Activated CD4-positive, alpha-beta T cell treated with anti-CD3 and anti-CD28 coated beads, Interleukin-2, amount 10 ng/mL, durations not matched to agents 24 days and 14 days (primary cell): ENCODE measurements at regions of chr16 and their contacts with region 1.

Region 1: GRCh38 chr16:28846080-28846932 is at the start of gene TUFM:
- DNase-seq: peak; percentile 100
- H3K4me3 Mint-ChIP-seq: peak within 1 kb of the TSS; percentile 94
- H3K27ac Mint-ChIP-seq: peak within 1 kb of the TSS; percentile 98
- H3K4me1 Mint-ChIP-seq: peaks cover 25% of the 10 kb centered on the region
- H3K27me3 Mint-ChIP-seq: no peaks in the 10 kb centered on the region
- total RNA-seq, gene TUFM: 276 and 279 TPM in 2 replicates

Region 2: GRCh38 chr16:28823872-28824716 is 22.2 kb before region 1 on chr16:
- intact Hi-C with region 1: loop called (anchors 1 kb)
- DNase-seq: peak; percentile 98
- H3K4me3 Mint-ChIP-seq: peak overlapping the region; percentile 100
- H3K27ac Mint-ChIP-seq: peak overlapping the region; percentile 100
- H3K4me1 Mint-ChIP-seq: peaks cover 47% of the 10 kb centered on the region
- H3K27me3 Mint-ChIP-seq: peaks cover 2% of the 10 kb centered on the region

Region 3: DNA sequence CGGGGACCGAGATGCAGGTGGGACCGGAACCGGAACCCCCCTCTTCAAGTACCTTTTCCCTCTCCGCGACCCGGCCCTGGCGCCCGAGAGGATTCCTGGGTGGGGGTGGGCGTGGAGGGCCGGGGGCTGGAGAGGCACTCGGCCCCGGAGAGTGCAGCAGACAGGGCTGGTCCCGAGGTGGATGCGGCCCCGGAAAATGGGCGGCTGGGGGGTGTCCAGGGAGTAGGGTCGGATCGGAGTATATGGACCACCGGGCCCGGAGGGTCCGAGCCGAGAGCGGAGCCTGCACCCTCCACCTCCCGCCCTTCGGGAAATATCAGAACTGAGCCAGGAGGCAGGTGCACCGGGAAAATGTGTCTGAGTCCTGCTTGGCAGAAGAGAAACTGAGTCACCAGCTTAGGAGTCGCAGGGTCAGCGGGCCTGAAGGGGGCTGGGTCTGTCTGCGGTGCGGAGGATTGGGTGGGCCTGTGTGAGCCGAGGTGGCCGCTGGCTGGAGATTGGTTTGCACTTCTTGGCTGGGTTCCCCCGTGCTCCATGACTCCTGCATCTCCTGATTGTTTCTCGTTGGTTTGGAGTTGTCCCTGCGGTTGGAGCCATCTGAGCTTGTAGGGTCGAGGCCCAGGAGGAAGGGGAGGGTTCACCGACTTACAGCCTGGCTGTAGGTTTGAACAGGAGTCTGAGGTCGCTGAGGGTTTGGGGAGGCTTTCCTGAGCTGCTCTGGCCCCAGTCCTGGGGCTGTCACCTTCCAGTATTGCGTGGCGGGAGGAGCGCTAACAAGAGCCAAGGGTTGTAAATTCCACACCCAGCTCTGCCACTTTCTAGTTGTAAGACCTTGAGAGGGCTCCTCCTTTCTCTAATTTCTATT is 17.9 kb after region 1 on chr16:
- intact Hi-C with region 1: loop called (anchors 1 kb)
- DNase-seq: peak; percentile 69
- H3K4me3 Mint-ChIP-seq: peak overlapping the region; percentile 100
- H3K27ac Mint-ChIP-seq: peak overlapping the region; percentile 99
- H3K4me1 Mint-ChIP-seq: peaks cover 22% of the 10 kb centered on the region
- H3K27me3 Mint-ChIP-seq: no peaks in the 10 kb centered on the region

Region 4: DNA sequence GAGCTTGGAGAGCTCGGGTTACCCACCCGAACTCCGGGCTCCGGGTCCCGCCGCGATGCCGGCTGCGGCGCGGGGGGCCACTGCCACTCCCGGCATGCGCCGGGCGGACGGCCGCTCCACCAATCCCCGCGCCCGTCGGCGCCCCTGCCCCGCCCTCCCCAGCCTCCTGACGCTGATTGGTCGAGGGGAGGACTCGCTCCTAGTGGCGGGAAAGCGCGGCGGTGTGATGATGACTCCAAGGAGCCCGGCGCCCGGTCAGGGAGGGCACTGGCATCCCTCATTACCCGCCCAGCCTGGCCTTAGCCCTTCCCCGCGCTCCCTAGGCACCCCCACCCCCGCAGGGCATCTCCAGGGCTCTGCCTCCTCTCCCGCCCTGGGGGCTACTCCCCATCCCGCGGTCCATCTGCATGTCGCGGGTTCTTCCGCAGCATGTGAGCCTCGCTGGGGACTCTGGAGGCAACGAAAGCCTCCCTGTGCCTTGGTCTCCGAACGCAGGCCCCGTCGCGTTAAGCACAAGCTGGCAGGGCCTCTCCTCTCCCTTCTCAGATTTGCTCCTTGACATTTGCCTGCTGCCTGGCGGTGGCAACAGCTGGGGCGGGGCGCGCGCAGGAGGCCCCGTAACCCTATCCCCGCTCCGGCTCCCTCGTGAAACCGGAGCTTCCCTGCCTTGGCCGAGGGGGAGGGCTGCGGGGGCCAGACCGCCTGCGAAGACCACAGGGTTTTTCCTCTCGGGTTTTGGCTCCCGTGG is 33.7 kb after region 1 on chr16:
- intact Hi-C with region 1: loop called (anchors 2 kb)
- DNase-seq: peak; percentile 95
- H3K4me3 Mint-ChIP-seq: peak overlapping the region; percentile 96
- H3K27ac Mint-ChIP-seq: peak overlapping the region; percentile 81
- H3K4me1 Mint-ChIP-seq: peaks cover 21% of the 10 kb centered on the region
- H3K27me3 Mint-ChIP-seq: no peaks in the 10 kb centered on the region

Region 5: DNA sequence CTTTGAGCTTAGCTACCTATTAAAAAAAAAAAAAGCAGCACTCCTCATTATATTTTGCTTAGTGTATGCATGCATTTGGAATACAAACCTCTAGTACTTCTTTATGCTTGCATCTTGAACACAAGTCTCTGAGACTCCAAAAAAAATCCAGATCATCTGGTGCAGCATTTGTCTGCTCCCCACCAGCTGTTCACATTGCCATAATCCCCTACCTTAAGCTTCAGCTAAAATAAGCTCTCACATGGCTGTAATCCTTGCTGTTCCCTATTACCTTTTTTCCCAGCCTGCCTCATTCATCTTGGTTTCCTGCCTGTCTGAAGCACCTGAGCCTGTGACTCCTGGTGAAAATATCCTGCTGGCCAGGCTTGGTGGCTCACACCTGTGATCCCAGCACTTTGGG is 97.0 kb after region 1 on chr16:
- intact Hi-C with region 1: loop called (anchors 1 kb)
- DNase-seq: no peak
- H3K4me3 Mint-ChIP-seq: no peak overlapping the region
- H3K27ac Mint-ChIP-seq: no peak overlapping the region
- H3K4me1 Mint-ChIP-seq: peaks cover 15% of the 10 kb centered on the region
- H3K27me3 Mint-ChIP-seq: peaks cover 2% of the 10 kb centered on the region

Region 6: DNA sequence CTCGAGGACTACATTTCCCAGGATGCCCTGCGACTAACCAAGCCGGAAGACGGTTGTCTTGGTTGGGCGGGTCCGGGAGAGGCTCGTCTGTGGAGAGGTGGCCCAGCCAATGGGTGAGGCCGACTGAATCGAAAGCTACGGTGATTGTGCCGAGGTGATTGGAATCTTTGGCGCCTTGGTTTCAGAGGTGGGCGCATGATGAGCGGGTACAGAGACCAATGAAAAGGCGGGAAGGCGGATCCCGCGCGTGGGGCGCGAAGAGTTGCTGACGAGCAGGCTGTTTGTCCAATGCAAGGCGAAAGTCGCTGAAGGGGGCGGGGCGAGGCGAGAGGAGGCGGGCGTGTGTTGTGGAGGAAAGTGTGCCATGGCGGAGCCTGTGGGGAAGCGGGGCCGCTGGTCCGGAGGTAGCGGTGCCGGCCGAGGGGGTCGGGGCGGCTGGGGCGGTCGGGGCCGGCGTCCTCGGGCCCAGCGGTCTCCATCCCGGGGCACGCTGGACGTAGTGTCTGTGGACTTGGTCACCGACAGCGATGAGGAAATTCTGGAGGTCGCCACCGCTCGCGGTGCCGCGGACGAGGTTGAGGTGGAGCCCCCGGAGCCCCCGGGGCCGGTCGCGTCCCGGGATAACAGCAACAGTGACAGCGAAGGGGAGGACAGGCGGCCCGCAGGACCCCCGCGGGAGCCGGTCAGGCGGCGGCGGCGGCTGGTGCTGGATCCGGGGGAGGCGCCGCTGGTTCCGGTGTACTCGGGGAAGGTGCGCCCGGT is 104.5 kb after region 1 on chr16 and contains the start of gene NFATC2IP:
- intact Hi-C with region 1: loop called (anchors 1 kb)
- DNase-seq: peak; percentile 100
- H3K4me3 Mint-ChIP-seq: peak within 1 kb of the TSS; percentile 93
- H3K27ac Mint-ChIP-seq: peak within 1 kb of the TSS; percentile 94
- H3K4me1 Mint-ChIP-seq: peaks cover 27% of the 10 kb centered on the region
- H3K27me3 Mint-ChIP-seq: no peaks in the 10 kb centered on the region
- total RNA-seq, gene NFATC2IP: 108 and 112 TPM in 2 replicates